Heart left ventricle (tissue), 16 donors: ENCODE measurements at regions of chr9 and their contacts with region 1.

Region 1: GRCh38 chr9:135524130-135524861 is 3.1 kb downstream of the LCN1 start:
- DNase-seq: peak in 1 of 5 donors; percentile 60
- ATAC-seq: peak in 3 of 4 donors; percentile 5 to 45 (median 23)
- H3K4me3 ChIP-seq: no peak overlapping the region
- H3K27ac ChIP-seq: no peak overlapping the region
- H3K4me1 ChIP-seq: no peaks in the 10 kb centered on the region
- H3K27me3 ChIP-seq: peaks cover 0 to 25% (median 3%) of the 10 kb centered on the region in 9 donors
- CTCF ChIP-seq: no peak
- POLR2A ChIP-seq: no peak

Region 2: DNA sequence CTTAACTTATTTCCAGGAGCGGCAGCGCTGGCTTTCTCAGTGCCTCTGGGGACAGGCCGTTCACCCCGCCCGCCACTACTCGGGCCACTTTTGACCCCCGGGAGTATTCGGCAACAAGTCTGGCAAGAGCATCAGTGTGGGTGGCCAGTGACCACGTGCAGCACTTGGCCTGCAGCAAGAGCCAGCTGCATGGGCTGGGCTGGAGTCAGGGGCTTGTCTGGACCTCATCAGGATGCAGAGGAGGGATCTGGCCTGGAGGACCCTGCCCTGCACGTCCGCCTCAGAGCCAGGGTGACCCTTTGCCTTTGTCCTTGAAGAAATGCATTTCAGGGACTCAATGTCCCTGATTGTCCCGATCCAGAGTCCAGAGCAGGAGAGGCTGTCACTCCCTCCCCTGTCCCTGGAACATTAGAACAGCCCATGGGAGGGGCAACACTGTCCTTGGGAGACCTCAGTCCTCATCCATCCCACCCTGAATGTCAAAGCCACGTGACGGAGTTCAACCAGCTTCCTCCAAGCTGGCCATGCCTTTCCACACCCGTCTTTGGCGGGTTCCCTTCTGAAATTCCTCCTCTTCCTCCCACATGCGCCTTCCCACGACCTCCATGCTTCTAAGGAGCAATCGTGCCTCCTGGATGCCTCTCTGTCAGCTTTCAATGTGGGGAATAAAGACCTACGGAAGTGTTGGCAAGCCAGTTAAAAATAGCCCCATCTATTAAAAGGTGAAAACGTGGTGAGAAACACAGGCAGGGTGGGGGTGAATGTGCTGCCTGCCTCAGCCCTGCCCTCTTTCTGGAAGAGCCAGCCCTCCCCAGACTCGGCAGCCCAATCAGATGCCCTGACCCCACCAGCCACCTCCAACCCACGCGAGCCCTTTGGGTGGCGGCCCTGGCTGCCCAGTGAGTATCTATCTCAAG is 337.8 kb before region 1 on chr9:
- intact Hi-C with region 1: no loop called
- DNase-seq: peak in 1 of 5 donors; percentile 51
- ATAC-seq: peak in 3 of 4 donors; percentile 44 to 76 (median 47)
- H3K4me3 ChIP-seq: no peak overlapping the region
- H3K27ac ChIP-seq: no peak overlapping the region
- H3K4me1 ChIP-seq: peaks cover 0 to 15% (median 9%) of the 10 kb centered on the region in 12 donors
- H3K27me3 ChIP-seq: peaks cover 3 to 66% (median 17%) of the 10 kb centered on the region in 9 donors
- CTCF ChIP-seq: no peak
- POLR2A ChIP-seq: no peak

Region 3: DNA sequence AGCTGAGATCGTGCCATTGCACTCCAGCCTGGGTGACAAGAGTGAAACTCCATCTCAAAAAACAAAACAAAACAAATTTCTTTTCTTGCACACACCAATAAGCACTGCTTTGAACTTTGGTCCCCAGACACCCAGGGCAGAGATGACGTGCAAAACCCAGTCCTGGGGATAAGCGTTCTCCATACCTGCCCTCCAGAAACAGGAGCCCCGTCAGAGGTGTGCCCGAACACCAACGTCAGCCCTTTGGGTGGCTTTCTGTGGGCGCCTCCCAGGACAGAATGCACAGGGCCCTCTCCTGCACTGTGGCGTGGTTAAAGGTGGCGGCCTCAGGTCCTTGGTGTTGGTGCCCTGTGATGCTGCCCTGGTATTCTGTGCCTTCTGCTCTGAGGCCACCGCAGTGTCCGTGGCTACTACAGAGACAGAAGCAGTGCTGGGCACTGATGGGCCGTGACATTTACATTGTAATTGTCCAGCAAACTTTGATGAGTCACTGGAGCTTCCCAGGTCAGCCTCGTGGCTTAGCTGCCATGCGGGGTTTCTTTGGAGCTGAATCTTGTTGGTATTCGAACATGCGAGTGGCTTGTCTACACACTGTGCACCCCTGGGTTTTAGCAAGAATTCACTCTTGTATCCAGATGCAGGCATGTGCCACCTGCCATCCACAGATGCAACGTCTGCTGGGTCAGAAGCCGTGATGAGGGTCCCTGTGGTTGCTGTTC is 34.9 kb before region 1 on chr9:
- intact Hi-C with region 1: loop called in 1 of 10 experiments (anchors 2 kb)
- DNase-seq: peak in 1 of 5 donors; percentile 28
- ATAC-seq: peak in 1 of 4 donors; percentile 18
- H3K4me3 ChIP-seq: no peak overlapping the region
- H3K27ac ChIP-seq: no peak overlapping the region
- H3K4me1 ChIP-seq: no peaks in the 10 kb centered on the region
- H3K27me3 ChIP-seq: no peaks in the 10 kb centered on the region
- CTCF ChIP-seq: no peak
- POLR2A ChIP-seq: no peak

Region 4: DNA sequence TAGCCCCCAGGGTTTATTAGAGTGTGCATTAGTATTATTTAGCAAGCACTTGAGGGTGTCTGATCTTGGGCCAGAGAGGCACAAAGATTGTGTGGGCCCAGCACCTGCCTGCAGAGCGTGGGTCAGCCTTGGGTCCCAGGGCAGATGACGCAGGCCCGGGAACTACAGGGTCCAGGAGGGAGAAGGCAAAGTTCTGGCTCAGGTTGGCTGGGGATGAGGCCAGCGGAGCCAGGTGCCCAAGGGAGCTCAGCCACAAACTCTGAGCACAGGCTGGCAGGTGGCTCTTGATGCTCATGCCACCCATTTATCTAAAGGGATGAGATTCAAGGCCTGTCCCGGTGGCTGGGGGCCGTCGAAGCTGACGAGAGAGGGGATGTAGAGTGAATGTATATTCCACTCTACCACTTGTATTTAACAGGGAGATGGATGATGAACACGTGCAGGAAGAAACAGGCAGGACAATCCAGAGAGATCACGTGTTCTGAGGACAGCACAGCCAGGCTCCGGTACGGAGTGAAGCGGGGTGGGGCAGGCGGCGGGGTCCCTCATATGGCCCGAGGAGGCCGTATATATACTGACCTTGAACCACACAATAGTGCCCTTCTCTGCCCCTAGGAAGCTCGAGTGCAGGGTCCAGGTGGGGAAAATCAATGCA is 20.8 kb after region 1 on chr9:
- intact Hi-C with region 1: no loop called
- DNase-seq: no peak
- ATAC-seq: no peak
- H3K4me3 ChIP-seq: no peak overlapping the region
- H3K27ac ChIP-seq: no peak overlapping the region
- H3K4me1 ChIP-seq: no peaks in the 10 kb centered on the region
- H3K27me3 ChIP-seq: peaks cover 0 to 4% (median 0%) of the 10 kb centered on the region in 9 donors
- CTCF ChIP-seq: no peak
- POLR2A ChIP-seq: no peak

Region 5: DNA sequence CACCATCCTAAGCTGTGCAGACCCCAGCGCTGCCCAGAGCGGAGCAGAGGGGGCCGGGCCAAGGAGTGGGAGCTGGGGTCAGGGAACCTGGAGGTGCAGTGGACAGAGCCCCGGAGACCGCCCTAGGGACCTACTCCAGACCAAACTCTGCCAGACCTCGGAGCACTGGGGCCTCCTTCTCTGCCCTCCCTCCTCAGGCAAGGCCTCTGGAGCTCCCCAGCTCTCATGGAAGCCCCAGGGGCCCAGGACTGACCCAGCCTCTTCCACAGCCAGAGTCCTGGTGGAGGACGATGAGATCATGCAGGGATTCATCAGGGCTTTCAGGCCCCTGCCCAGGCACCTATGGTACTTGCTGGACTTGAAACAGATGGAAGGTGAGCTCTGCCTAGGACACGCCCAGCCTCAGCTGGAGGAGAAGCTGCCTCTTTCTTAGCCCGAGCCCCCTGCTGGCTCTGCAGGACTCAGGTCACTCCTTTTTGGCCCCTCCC is 40.9 kb after region 1 on chr9:
- intact Hi-C with region 1: no loop called
- DNase-seq: no peak
- ATAC-seq: no peak
- H3K4me3 ChIP-seq: no peak overlapping the region
- H3K27ac ChIP-seq: no peak overlapping the region
- H3K4me1 ChIP-seq: no peaks in the 10 kb centered on the region
- H3K27me3 ChIP-seq: peaks cover 0 to 31% (median 0%) of the 10 kb centered on the region in 9 donors
- CTCF ChIP-seq: no peak
- POLR2A ChIP-seq: no peak